Breast epithelium (tissue), 4 donors: ENCODE measurements at regions of chr7 and their contacts with region 1.

Region 1: DNA sequence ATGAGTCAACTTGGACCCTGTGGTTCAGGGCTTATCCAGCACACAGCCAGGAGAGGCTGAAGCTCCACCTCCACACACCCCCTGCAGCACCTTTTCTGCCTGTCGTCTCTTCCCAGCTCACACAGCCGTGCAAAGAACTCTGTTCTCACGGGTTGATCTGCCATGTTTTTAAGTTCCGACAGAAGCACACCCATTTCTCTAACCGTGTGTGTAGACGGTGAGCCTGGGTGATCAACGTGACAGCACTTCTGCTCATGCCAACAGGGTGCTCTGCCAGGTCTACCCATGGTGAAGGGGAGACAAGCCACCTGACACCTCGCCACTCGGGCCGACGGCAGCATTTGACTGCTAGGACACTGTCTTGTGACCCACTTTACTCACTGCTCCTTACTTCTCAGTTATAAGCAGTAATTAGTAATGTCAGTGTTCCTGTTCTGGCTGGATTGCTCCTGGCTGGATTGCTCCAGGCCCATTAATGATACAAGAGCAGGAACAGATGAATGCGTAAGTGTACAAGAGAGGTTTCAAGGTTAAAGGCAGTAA is 90.5 kb downstream of the RNF216 start:
- DNase-seq: no peak
- H3K4me3 ChIP-seq: peak overlapping the region in 1 of 3 donors; percentile 29
- H3K27ac ChIP-seq: peak overlapping the region; percentile 88 to 95
- H3K4me1 ChIP-seq: peaks cover 20 to 43% of the 10 kb centered on the region in 2 donors
- H3K27me3 ChIP-seq: no peaks in the 10 kb centered on the region
- CTCF ChIP-seq: no peak
- POLR2A ChIP-seq: no peak

Region 2: DNA sequence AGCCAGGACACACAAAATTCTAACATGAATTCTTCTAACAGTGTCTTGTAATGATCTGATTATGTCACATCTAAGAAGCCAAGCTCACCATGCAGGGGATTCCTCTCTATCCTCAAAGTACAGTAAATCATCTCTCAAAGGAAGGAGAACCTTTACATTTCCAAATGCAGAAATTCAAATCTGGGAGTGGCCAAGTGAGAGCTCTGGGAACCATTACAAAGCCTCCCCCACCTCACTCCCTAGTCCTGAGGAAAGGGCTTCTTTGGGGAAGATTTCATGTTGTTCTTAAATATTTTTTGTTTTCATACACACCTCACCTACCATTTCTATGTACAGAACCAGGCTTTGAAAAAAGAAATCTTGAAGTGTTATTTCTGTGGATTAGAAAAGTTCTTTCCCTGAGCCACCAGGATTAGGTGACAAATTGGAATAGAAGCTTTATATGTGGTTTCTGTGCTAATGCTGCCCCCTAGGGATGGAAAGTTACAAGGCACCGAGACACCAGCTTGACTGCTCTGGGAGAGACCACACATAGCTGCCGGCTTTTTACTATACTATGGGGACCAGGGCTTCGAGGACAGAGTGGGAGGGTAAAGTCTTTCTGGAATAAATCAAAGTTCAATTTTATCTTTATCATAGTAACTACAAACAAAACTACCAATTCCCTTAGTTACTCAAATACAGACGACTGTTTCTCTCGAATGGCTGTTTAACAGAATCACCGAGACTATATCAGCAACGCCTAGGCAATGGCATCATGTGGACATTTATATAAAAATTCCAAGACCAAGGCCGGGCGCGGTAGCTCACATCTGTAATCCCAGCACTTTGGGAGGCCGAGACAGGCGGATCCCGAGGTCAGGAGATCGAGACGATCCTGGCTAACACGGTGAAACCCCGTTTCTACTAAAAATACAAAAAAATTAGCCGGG is 25.6 kb before region 1 on chr7:
- intact Hi-C with region 1: loop called (anchors 1 kb)
- DNase-seq: peak; percentile 63 to 68
- H3K4me3 ChIP-seq: no peak overlapping the region
- H3K27ac ChIP-seq: no peak overlapping the region
- H3K4me1 ChIP-seq: no peaks in the 10 kb centered on the region
- H3K27me3 ChIP-seq: no peaks in the 10 kb centered on the region
- CTCF ChIP-seq: peak; percentile 84 to 92 (median 92)
- POLR2A ChIP-seq: no peak